GM12878 (cell line): ENCODE measurements at regions of chr3 and their contacts with region 1.

Region 1: DNA sequence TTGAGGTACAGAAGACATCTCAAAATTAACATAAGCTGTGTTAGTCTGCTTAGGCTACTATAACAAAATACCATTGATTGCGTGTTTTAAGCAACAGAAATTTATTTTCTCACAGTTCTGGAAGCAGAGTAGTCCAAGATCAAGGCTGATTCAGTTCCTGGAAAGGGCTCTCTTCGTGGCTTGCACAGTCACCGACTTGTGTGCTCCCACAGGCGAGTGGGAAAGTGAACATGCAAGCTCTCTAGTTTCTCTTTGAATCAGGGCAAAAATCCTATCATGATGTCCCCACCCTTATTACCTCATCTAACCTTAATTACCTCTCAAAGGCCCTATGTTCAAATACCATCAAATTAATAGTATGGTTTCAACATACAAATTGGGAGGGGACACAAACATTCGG is 505.9 kb downstream of the ZIC1 start:
- DNase-seq: no peak
- ATAC-seq: peak; percentile 84
- H3K4me3 ChIP-seq: no peak overlapping the region
- H3K27ac ChIP-seq: no peak overlapping the region
- H3K4me1 ChIP-seq: no peaks in the 10 kb centered on the region
- H3K27me3 ChIP-seq: no peaks in the 10 kb centered on the region
- CTCF ChIP-seq: no peak
- EP300 ChIP-seq: no peak
- POLR2A ChIP-seq: no peak
- RAD21 ChIP-seq: no peak

Region 2: GRCh38 chr3:147431751-147432150 is 483.3 kb before region 1 on chr3:
- CTCF ChIA-PET with region 1: no interaction called
- POLR2A ChIA-PET with region 1: no interaction called
- RAD21 ChIA-PET with region 1: no interaction called
- SMC1A ChIA-PET with region 1: no interaction called
- in situ Hi-C with region 1: no loop called
- intact Hi-C with region 1: no loop called
- DNase-seq: no peak
- ATAC-seq: no peak
- H3K4me3 ChIP-seq: no peak overlapping the region
- H3K27ac ChIP-seq: no peak overlapping the region
- H3K4me1 ChIP-seq: no peaks in the 10 kb centered on the region
- H3K27me3 ChIP-seq: no peaks in the 10 kb centered on the region
- CTCF ChIP-seq: no peak
- EP300 ChIP-seq: no peak
- POLR2A ChIP-seq: no peak
- RAD21 ChIP-seq: no peak

Region 3: GRCh38 chr3:147793841-147794240 is 121.2 kb before region 1 on chr3:
- CTCF ChIA-PET with region 1: no interaction called
- POLR2A ChIA-PET with region 1: no interaction called
- RAD21 ChIA-PET with region 1: no interaction called
- SMC1A ChIA-PET with region 1: no interaction called
- in situ Hi-C with region 1: no loop called
- intact Hi-C with region 1: no loop called
- DNase-seq: no peak
- ATAC-seq: no peak
- H3K4me3 ChIP-seq: no peak overlapping the region
- H3K27ac ChIP-seq: no peak overlapping the region
- H3K4me1 ChIP-seq: no peaks in the 10 kb centered on the region
- H3K27me3 ChIP-seq: no peaks in the 10 kb centered on the region
- CTCF ChIP-seq: no peak
- EP300 ChIP-seq: no peak
- POLR2A ChIP-seq: no peak
- RAD21 ChIP-seq: no peak

Region 4: GRCh38 chr3:147890114-147890513 is 24.9 kb before region 1 on chr3:
- CTCF ChIA-PET with region 1: interaction called, 4 read pairs
- POLR2A ChIA-PET with region 1: interaction called, 3 read pairs
- RAD21 ChIA-PET with region 1: interaction called, 32 read pairs
- SMC1A ChIA-PET with region 1: interaction called, 45 read pairs
- in situ Hi-C with region 1: no loop called
- intact Hi-C with region 1: no loop called
- DNase-seq: peak; percentile 33
- ATAC-seq: peak; percentile 94
- H3K4me3 ChIP-seq: no peak overlapping the region
- H3K27ac ChIP-seq: no peak overlapping the region
- H3K4me1 ChIP-seq: no peaks in the 10 kb centered on the region
- H3K27me3 ChIP-seq: no peaks in the 10 kb centered on the region
- CTCF ChIP-seq: no peak
- EP300 ChIP-seq: peak; percentile 40 to 52; a peak in 2 of 4 replicates
- POLR2A ChIP-seq: no peak
- RAD21 ChIP-seq: no peak

Region 5: DNA sequence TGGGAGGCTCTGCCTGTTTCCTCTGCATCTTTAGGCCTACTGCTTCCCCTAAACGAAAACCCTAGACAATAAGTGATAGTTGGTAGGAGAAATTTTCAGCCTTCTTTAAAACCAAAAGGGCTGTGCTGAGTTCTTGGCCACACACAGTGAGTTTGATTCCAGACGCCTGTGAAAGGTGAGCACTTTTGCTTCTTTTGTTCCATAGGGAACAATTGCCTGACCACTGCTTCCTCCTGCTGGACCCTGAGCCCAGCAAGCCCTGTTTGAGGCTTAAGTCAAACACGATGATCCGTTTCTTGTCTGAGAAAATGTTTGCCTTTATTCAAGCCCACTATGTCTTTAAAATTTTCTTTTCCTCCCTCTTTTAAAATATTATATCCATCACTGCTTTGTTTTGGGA is 12.0 kb before region 1 on chr3:
- CTCF ChIA-PET with region 1: interaction called, 3 read pairs
- POLR2A ChIA-PET with region 1: interaction called, 5 read pairs
- RAD21 ChIA-PET with region 1: no interaction called
- SMC1A ChIA-PET with region 1: interaction called, 13 read pairs
- in situ Hi-C with region 1: no loop called
- intact Hi-C with region 1: no loop called
- DNase-seq: no peak
- ATAC-seq: no peak
- H3K4me3 ChIP-seq: no peak overlapping the region
- H3K27ac ChIP-seq: no peak overlapping the region
- H3K4me1 ChIP-seq: no peaks in the 10 kb centered on the region
- H3K27me3 ChIP-seq: no peaks in the 10 kb centered on the region
- CTCF ChIP-seq: no peak
- EP300 ChIP-seq: no peak
- POLR2A ChIP-seq: no peak
- RAD21 ChIP-seq: no peak

Region 6: GRCh38 chr3:147945968-147946519 is 31.0 kb after region 1 on chr3:
- CTCF ChIA-PET with region 1: interaction called, 4 read pairs
- POLR2A ChIA-PET with region 1: no interaction called
- RAD21 ChIA-PET with region 1: interaction called, 16 read pairs
- SMC1A ChIA-PET with region 1: interaction called, 18 read pairs
- in situ Hi-C with region 1: no loop called
- intact Hi-C with region 1: no loop called
- DNase-seq: peak; percentile 17
- ATAC-seq: peak; percentile 85
- H3K4me3 ChIP-seq: peak overlapping the region; percentile 37; the same call in 1 of the 2 replicates
- H3K27ac ChIP-seq: no peak overlapping the region
- H3K4me1 ChIP-seq: no peaks in the 10 kb centered on the region
- H3K27me3 ChIP-seq: no peaks in the 10 kb centered on the region
- CTCF ChIP-seq: peak; percentile 21 to 41 (median 32); a peak in 5 of 6 replicates
- EP300 ChIP-seq: no peak
- POLR2A ChIP-seq: no peak
- RAD21 ChIP-seq: 0 out of 2 replicates have a peak, but pooled peaks have one; percentile 23